Activated CD4-positive, alpha-beta memory T cell treated with anti-CD3 and anti-CD28 coated beads, Interleukin-2, amount 10 ng/mL, durations not matched to agents 7 days and 5 days (primary cell): ENCODE measurements at regions of chr10 and their contacts with region 1.

Region 1: GRCh38 chr10:33330543-33331378 is 3.7 kb downstream of the NRP1 start:
- DNase-seq: peak; percentile 80
- H3K4me3 Mint-ChIP-seq: no peak overlapping the region
- H3K27ac Mint-ChIP-seq: no peak overlapping the region
- H3K4me1 Mint-ChIP-seq: peaks cover 28% of the 10 kb centered on the region
- H3K27me3 Mint-ChIP-seq: peaks cover 54% of the 10 kb centered on the region

Region 2: DNA sequence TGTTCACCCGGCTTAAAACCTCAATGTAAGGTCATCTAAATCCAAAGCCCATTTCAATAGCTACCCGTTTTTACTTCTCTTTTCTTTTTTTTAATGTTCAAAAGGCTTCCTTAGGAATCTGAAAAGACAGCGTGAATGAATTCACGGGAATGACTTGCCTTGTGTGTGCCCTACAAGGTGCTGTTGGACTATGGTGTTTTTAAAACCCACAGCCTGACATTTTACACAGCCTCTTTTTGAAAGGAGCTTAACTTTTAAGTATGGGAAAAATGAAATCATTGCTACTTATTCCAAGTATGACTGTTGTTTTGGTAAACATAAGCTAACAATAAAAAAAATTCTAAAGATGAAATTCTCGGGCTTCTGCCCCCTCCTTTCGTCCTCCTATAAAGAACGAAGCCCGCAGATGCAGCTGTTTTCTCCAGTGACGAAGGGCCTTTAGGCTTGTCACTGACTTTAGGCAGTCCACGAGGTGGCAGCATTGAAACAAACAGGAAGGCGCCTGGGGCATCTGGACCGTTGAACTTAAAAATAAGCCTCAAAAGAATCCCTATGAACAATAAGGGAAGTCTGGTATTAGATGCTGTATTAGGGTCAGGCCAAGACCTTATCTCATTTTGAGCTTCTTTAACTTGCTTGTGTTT is 137.6 kb before region 1 on chr10:
- CTCF ChIA-PET with region 1: interaction called, 15 read pairs
- POLR2A ChIA-PET with region 1: no interaction called
- DNase-seq: peak; percentile 78
- H3K4me3 Mint-ChIP-seq: no peak overlapping the region
- H3K27ac Mint-ChIP-seq: no peak overlapping the region
- H3K4me1 Mint-ChIP-seq: peaks cover 4% of the 10 kb centered on the region
- H3K27me3 Mint-ChIP-seq: peaks cover 18% of the 10 kb centered on the region

Region 3: DNA sequence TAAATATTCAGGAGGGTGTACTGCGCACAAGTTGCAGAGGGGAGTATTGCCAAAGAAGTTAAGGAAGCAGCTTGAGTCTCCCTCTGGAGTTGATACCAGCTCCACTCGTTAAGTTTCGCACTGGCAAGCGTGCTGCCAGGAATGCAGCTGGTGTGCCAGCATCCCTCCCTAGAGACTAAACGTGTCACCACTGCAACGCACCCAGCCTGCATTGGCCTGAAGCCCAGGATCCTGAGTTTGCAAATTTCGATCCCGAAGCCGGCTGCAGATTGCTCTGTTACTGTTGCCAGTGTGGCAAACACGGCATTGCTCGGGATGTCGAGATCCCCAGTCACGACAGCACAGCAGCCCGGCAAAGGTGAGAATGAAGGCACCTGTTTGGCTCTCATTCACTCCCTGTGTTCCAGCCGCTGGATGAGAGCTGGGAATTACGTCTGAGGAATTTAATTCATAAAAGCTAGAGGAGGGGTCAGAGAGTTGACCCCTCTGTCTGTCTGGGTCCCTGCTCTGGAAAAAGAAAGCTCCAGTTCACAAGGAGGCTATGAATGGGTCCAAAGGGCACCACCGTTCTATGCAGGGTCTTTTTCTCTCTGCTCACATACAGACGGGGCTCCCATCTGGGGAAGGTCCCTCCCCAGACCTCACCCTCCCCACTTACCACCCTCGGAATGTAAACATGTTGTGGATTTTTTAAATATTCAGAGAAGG is 57.3 kb before region 1 on chr10:
- CTCF ChIA-PET with region 1: no interaction called
- POLR2A ChIA-PET with region 1: no interaction called
- DNase-seq: no peak
- H3K4me3 Mint-ChIP-seq: no peak overlapping the region
- H3K27ac Mint-ChIP-seq: no peak overlapping the region
- H3K4me1 Mint-ChIP-seq: no peaks in the 10 kb centered on the region
- H3K27me3 Mint-ChIP-seq: peaks cover 42% of the 10 kb centered on the region